ENCODE measurements at regions of chr2 and their contacts with region 1.

Region 1: GRCh38 chr2:70616168-70616694 is 62.6 kb upstream of the TGFA start:
- DNase-seq: no peak

Region 2: GRCh38 chr2:70301344-70302194 is 314.7 kb before region 1 on chr2 and contains the start of gene FAM136A:
- intact Hi-C with region 1: loop called (anchors 5 kb)
- DNase-seq: peak; percentile 96
- total RNA-seq, gene FAM136A: 21.3 TPM

Region 3: DNA sequence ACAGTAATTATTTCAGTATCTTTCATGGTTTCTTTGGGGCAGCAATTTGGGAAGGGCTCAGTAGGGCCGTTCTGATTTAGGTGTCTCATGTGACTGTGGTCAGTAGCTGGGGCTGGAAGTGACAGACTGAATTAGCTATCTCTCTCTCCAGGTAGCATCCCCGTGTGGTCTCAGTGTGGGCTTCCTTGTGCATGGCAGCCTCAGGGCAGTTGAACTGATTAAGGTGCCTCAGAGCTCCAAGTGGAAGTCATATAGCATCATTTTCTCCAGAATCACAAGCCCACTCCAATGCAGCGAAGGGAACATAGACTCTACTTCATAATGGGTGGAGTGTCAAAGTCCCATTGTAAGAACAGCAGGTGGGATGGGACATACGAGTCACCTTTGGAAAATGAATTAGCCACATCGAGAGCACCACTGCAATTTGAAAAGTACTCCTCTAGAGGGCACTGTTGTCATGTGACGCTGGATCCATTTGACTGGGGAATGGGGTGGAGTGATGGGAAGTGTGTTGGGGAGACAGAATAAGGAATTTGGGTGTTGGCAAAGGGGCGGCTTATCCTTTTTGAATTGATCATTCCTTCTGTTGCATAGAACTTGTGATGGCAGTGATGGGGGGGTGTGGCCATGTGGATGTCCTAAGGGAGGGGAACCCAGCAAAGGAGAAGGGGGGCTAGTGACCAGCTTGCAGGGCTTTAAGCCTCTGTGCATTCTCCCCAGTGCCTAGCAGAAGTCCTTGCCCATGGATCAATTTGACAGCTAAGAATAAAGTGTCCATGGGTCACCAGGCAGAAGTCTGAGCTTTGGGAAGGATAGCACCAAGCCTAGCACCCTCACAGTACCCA is 275.1 kb before region 1 on chr2:
- intact Hi-C with region 1: loop called (anchors 1 kb)
- DNase-seq: no peak